H1 (cell line): ENCODE measurements at regions of chr10 and their contacts with region 1.

Region 1: GRCh38 chr10:102151774-102152544 is at the start of gene NOLC1:
- DNase-seq: peak; percentile 99 to 100
- H3K4me3 ChIP-seq: peak within 1 kb of the TSS; percentile 70 to 100 (median 94)
- H3K27ac ChIP-seq: peak within 1 kb of the TSS; percentile 97
- H3K4me1 ChIP-seq: peaks cover 0 to 8% (median 4%) of the 10 kb centered on the region in 4 experiments; a peak in 5 of 7 replicates
- H3K27me3 ChIP-seq: no peaks in the 10 kb centered on the region
- CTCF ChIP-seq: no peak
- EP300 ChIP-seq: peak in 1 of 2 experiments; percentile 90; a peak in 1 of 3 replicates
- POLR2A ChIP-seq: peak; percentile 96 to 99
- RAD21 ChIP-seq: no peak
- total RNA-seq, gene NOLC1: 191 and 194 TPM in 2 replicates

Region 2: DNA sequence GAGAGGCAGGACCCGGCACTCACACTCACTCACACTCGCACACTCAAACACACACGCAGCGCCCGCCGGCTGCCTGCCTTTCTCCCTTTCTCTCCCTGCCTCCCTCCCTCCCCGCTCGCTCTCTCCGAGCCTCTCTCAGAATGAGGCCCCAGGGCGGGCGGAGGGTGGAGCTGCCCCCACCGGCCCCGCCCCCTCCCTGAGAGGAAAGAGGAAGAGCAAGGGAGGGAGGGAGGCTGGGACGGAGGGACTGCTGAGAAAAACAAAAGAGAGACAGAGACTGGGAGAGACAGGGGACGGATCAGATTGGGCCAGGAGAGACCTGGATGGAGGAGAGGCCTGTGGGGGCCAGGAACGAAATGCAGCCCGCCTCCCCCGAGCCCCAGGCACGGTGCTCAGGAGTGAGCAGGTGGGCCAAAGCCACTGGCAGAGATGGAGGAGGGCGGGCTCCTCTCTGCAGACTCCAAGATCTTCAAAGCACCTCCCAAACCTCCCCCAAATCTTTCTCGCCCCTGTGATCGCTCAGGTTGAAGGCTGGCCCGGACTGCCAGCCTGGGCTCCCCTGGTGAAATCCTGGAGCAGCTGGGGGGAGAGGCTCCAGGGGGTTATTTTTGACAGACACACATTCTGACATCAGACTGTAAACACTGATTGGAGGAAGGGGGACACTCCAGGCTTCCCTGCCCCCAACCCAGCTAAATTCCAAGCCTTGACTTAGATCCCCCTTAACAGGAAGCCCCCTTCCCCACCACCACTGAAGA is 36.9 kb before region 1 on chr10:
- CTCF ChIA-PET with region 1: interaction called, 5 read pairs
- POLR2A ChIA-PET with region 1: interaction called, 37 read pairs
- DNase-seq: peak in 1 of 2 experiments; percentile 85
- H3K4me3 ChIP-seq: peak overlapping the region; percentile 46 to 96 (median 69)
- H3K27ac ChIP-seq: peak overlapping the region; percentile 59; the same call in 1 of the 2 replicates
- H3K4me1 ChIP-seq: peaks cover 22 to 48% (median 31%) of the 10 kb centered on the region in 4 experiments
- H3K27me3 ChIP-seq: no peaks in the 10 kb centered on the region
- CTCF ChIP-seq: no peak
- EP300 ChIP-seq: no peak
- POLR2A ChIP-seq: peak; percentile 78 to 88
- RAD21 ChIP-seq: no peak

Region 3: GRCh38 chr10:102120142-102120990 is 31.6 kb before region 1 on chr10 and contains the start of gene LDB1:
- CTCF ChIA-PET with region 1: interaction called, 5 read pairs
- POLR2A ChIA-PET with region 1: interaction called, 37 read pairs
- DNase-seq: peak in 1 of 2 experiments; percentile 85
- H3K4me3 ChIP-seq: peak within 1 kb of the TSS; percentile 80 to 93 (median 84)
- H3K27ac ChIP-seq: peak within 1 kb of the TSS; percentile 88
- H3K4me1 ChIP-seq: peaks cover 22 to 49% (median 31%) of the 10 kb centered on the region in 4 experiments
- H3K27me3 ChIP-seq: no peaks in the 10 kb centered on the region
- CTCF ChIP-seq: no peak
- EP300 ChIP-seq: peak in 1 of 2 experiments; percentile 31; a peak in 1 of 3 replicates
- POLR2A ChIP-seq: peak in 1 of 2 experiments; percentile 84; a peak in 2 of 3 replicates
- RAD21 ChIP-seq: no peak
- total RNA-seq, gene LDB1: 88.4 and 88.8 TPM in 2 replicates

Region 4: GRCh38 chr10:102132563-102133372 is 19.2 kb before region 1 on chr10 and contains the start of gene PPRC1:
- CTCF ChIA-PET with region 1: interaction called, 20 read pairs
- POLR2A ChIA-PET with region 1: interaction called, 408 read pairs
- DNase-seq: peak; percentile 93 to 97
- H3K4me3 ChIP-seq: peak within 1 kb of the TSS; percentile 75 to 95 (median 86)
- H3K27ac ChIP-seq: peak within 1 kb of the TSS; percentile 92
- H3K4me1 ChIP-seq: peaks cover 0 to 12% (median 3%) of the 10 kb centered on the region in 4 experiments; a peak in 4 of 7 replicates
- H3K27me3 ChIP-seq: no peaks in the 10 kb centered on the region
- CTCF ChIP-seq: peak; percentile 72 to 84 (median 76)
- EP300 ChIP-seq: no peak
- POLR2A ChIP-seq: peak; percentile 85 to 94
- RAD21 ChIP-seq: peak; percentile 53 to 62
- total RNA-seq, gene PPRC1: 86.2 and 88.4 TPM in 2 replicates

Region 5: DNA sequence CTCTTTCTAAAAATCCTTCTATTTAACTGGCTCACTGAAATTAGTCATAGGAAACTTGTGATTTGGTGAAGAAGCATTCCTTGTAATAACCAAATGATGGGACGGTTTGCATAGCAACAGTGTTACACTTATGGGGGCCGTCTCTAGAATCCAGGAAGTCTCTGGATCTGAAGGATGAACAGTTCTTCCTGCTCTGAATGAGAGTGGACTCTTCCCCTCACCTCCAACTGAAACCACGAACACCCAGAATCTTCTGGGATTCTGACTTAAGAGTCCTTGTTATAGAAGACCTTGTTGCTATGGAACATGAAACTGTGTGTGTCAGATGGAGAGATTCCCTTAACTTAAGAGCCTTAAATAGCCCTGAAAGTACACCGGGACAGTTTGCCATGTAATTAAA is 23.5 kb after region 1 on chr10:
- CTCF ChIA-PET with region 1: interaction called, 28 read pairs
- POLR2A ChIA-PET with region 1: interaction called, 217 read pairs
- DNase-seq: no peak
- H3K4me3 ChIP-seq: no peak overlapping the region
- H3K27ac ChIP-seq: no peak overlapping the region
- H3K4me1 ChIP-seq: no peaks in the 10 kb centered on the region
- H3K27me3 ChIP-seq: no peaks in the 10 kb centered on the region
- CTCF ChIP-seq: no peak
- EP300 ChIP-seq: no peak
- POLR2A ChIP-seq: no peak
- RAD21 ChIP-seq: no peak